Heart right ventricle (tissue), 16 donors: ENCODE measurements at regions of chr9 and their contacts with region 1.

Region 1: DNA sequence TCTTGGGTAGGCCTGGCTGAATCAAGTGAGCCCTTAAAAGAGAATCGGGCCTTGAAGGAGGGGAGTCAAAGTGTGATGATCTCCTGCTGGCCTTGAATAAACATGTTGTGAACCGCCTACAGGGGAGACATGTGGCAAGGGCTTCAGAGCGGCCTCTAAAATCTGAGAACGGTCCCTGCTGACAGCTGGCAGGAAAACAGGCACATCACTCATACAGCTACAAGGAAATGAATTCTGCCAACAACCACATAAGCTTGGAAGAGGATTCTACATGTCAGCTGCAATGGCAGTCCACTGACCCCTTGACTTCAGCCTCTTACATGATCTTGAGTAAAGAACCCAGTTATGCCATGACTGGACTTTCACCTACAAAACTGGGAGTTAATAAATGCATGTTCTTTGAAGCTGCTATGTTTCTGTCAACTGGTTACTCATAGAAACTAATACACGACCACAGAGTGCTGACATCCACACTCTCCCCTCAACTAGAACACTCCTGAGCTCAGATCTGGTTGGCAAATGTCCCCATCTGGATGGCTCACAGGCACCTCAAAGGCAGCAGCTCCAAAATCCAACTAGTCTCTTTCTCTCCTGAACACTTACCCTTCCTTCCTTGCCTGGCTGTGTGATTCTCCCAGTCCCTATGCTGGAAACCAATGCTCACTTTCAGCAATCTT is 333.1 kb downstream of the ASTN2 start:
- DNase-seq: no peak
- ATAC-seq: no peak
- H3K4me3 ChIP-seq: no peak overlapping the region
- H3K27ac ChIP-seq: no peak overlapping the region
- H3K4me1 ChIP-seq: no peaks in the 10 kb centered on the region
- H3K27me3 ChIP-seq: peaks cover 0 to 7% (median 0%) of the 10 kb centered on the region in 7 donors
- CTCF ChIP-seq: no peak

Region 2: GRCh38 chr9:117000834-117001233 is 80.9 kb before region 1 on chr9:
- intact Hi-C with region 1: no loop called
- DNase-seq: no peak
- ATAC-seq: no peak
- H3K4me3 ChIP-seq: no peak overlapping the region
- H3K27ac ChIP-seq: no peak overlapping the region
- H3K4me1 ChIP-seq: no peaks in the 10 kb centered on the region
- H3K27me3 ChIP-seq: no peaks in the 10 kb centered on the region
- CTCF ChIP-seq: no peak

Region 3: DNA sequence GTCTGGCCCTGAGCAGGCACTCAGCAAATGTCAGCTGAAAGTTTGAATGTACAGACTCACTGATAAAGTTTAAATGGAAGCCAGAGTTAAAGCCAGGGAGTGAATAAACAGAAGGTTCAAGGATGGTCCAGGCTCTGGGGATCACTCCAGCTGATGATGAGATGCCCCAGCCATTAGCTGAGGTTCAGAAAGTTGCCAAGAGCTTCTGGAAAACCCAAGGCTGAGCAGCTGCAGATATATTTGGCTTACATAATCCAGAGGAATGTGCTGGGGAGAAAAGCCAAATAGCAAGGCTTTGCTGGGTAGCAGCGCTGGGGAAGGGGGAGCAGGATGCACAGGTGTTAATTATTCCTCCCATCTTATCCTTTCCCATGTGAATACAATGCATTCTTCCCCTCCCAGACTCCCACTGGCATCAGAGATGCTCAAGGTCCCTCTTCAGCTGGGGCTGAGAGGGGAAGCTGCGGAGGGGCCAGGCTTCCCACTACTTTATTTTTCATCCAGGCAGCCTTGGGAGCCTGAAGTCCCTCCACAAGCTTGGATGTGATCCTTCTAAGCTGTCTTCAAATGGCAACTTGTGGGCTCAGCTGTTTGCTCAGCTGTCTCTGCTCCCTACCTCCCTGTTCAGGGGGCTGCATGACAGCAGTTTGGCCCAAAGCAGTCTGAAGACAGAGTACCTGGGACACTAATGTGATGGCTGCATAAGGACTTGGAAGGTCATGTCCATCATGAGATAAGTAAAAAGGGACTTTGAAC is 53.5 kb before region 1 on chr9:
- intact Hi-C with region 1: loop called in 1 of 10 experiments (anchors 10 kb)
- DNase-seq: no peak
- ATAC-seq: peak in 7 of 8 donors; percentile 17 to 53 (median 34)
- H3K4me3 ChIP-seq: no peak overlapping the region
- H3K27ac ChIP-seq: no peak overlapping the region
- H3K4me1 ChIP-seq: peaks cover 0 to 4% (median 0%) of the 10 kb centered on the region in 9 donors
- H3K27me3 ChIP-seq: no peaks in the 10 kb centered on the region
- CTCF ChIP-seq: no peak

Region 4: GRCh38 chr9:117063721-117064471 is 17.9 kb before region 1 on chr9:
- intact Hi-C with region 1: no loop called
- DNase-seq: no peak
- ATAC-seq: peak in 1 of 8 donors; percentile 29
- H3K4me3 ChIP-seq: peak overlapping the region in 1 of 10 donors; percentile 22
- H3K27ac ChIP-seq: peak overlapping the region in 1 of 10 donors; percentile 3
- H3K4me1 ChIP-seq: peaks cover 0 to 9% (median 0%) of the 10 kb centered on the region in 9 donors
- H3K27me3 ChIP-seq: no peaks in the 10 kb centered on the region
- CTCF ChIP-seq: no peak

Region 5: DNA sequence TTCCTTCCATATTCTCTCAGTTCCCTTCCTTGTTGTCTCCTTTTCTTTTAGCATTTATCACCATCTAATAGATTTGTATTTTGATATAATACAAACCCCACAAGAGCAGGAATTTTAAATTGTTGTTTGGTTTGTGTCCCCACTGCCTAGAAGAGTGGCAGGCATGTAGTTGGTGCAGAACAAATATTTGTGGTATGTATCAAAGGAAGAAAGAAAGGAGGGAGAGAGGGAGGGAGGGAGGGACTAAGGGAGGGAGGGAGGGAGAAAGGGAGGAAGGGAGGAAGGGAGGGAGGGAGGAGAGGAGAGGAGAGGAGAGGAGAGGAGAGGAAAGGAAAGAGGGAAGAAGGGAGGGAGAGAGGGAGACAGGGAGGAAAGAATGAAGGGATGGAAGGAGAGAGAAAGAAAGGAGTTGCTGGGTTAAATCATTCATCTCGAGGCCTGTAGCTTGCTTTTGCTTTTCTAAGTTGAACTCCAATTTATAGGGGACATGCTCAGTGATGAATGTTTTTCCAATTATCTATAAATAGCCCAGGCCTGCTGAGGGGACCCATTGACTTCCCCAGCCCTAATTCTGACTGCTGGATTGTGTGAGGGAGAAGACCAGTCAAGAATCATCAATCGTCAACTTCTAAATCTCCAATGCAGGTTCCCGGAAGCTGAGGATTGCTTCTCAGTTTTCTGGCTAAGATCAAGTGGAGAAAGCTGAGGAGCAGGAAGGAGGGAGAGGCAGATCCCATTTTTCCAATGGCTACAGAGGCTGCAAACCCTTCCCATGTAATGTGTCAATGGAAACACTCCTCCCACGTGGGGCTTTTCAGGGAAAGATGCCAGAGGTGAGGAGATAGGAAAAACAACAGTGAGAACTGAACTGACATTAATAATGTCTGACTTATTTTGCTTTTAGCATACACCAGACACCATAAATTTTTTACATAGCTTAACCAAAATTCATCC is 12.4 kb after region 1 on chr9:
- intact Hi-C with region 1: no loop called
- DNase-seq: peak in 1 of 2 donors; percentile 5
- ATAC-seq: no peak
- H3K4me3 ChIP-seq: no peak overlapping the region
- H3K27ac ChIP-seq: no peak overlapping the region
- H3K4me1 ChIP-seq: peaks cover 0 to 6% (median 0%) of the 10 kb centered on the region in 9 donors
- H3K27me3 ChIP-seq: no peaks in the 10 kb centered on the region
- CTCF ChIP-seq: no peak